ENCODE measurements at regions of chr17 and their contacts with region 1.

Region 1: DNA sequence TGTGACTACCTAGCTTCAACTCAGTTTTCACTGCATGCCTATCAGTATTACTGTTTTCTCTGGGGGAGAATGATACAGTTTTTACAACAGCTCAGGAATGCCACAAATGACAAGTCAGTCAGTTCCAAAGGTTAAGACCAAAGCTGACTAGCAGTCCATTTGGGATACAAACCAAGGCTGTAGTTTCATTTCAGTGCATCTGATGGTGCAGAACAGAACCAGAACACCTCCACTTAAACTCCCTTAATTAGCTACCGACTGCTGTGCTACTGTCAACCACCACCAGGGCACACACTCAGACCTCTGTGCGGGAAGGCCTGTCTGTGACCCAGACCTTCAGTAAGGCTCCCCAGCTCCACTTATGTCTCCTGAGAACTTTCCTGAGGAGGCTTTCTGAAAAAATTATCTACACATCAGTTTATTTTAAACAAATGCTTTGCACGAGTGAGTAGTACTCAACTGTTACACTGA is 20.4 kb downstream of the NFE2L1 start:
- DNase-seq: peak; percentile 82 to 87
- H3K4me3 ChIP-seq: no peak overlapping the region
- H3K4me3 Mint-ChIP-seq: peak overlapping the region; percentile 22
- H3K27ac Mint-ChIP-seq: peak overlapping the region; percentile 52
- H3K4me1 ChIP-seq: peaks cover 15% of the 10 kb centered on the region
- H3K4me1 Mint-ChIP-seq: peaks cover 34% of the 10 kb centered on the region
- H3K27me3 ChIP-seq: no peaks in the 10 kb centered on the region
- H3K27me3 Mint-ChIP-seq: no peaks in the 10 kb centered on the region
- CTCF ChIP-seq: peak; percentile 82 to 86

Region 2: GRCh38 chr17:47810205-47810821 is 258.2 kb before region 1 on chr17:
- CTCF ChIA-PET with region 1: no interaction called
- POLR2A ChIA-PET with region 1: no interaction called
- intact Hi-C with region 1: no loop called
- DNase-seq: peak; percentile 100
- H3K4me3 ChIP-seq: no peak overlapping the region
- H3K4me3 Mint-ChIP-seq: peak overlapping the region; percentile 56
- H3K27ac Mint-ChIP-seq: peak overlapping the region; percentile 93
- H3K4me1 ChIP-seq: peaks cover 36% of the 10 kb centered on the region
- H3K4me1 Mint-ChIP-seq: peaks cover 36% of the 10 kb centered on the region
- H3K27me3 ChIP-seq: no peaks in the 10 kb centered on the region
- H3K27me3 Mint-ChIP-seq: no peaks in the 10 kb centered on the region
- CTCF ChIP-seq: no peak

Region 3: DNA sequence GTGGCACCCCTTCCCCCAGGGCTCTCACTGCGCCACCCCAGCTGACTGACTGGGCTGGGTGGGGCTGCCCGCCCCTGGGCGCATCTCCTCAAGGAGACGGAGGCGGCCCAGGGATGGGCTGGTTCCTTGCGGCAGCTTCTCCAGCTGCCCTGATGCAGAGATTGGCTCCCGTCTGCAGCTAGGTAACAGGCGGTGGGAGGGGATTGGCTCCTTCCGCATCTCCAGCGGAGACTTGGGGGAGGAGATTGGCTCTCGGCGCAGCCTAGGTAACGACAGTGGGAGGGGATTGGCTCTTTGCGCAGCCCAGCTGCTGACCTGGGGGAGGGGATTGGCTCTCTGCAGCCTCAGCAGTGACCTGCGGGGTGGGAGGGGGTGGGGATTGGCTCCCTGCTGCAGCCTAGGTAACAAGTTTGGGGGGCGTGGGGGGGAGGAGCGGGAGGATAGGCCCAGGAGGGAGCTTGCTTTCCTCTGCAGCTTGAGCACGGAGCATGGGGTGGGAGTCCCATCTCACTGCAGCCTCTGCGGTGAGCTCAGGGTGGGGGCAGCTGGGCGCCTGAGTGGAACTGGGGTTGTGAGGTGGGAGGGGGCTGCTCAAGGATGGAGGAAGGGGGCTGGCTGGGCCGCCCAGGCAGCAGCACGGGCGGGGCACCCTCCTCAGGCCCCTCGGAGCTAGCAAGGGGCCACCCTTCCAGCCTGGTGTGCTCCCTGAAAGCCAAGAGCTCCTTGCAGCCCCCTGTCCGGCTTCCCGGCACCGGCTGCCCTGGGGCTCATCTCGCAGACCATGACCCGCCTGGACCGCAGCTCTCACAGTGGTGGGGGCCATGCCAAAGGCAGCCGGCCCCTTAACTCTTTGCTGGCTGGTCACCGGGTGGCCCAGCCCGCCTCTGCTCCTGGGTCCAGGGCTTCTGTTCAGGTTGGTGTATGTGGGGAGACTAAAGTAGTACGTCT is 14.0 kb before region 1 on chr17:
- CTCF ChIA-PET with region 1: interaction called, 57 read pairs
- POLR2A ChIA-PET with region 1: interaction called, 90 read pairs
- intact Hi-C with region 1: no loop called
- DNase-seq: peak in 1 of 2 experiments; percentile 53
- H3K4me3 ChIP-seq: no peak overlapping the region
- H3K4me3 Mint-ChIP-seq: peak overlapping the region; percentile 18
- H3K27ac Mint-ChIP-seq: peak overlapping the region; percentile 97
- H3K4me1 ChIP-seq: peaks cover 30% of the 10 kb centered on the region
- H3K4me1 Mint-ChIP-seq: peaks cover 40% of the 10 kb centered on the region
- H3K27me3 ChIP-seq: no peaks in the 10 kb centered on the region
- H3K27me3 Mint-ChIP-seq: no peaks in the 10 kb centered on the region
- CTCF ChIP-seq: no peak

Region 4: GRCh38 chr17:48101012-48101720 is 32.6 kb after region 1 on chr17 and contains the start of gene CBX1:
- CTCF ChIA-PET with region 1: interaction called, 10 read pairs
- POLR2A ChIA-PET with region 1: interaction called, 4 read pairs
- intact Hi-C with region 1: no loop called
- DNase-seq: peak; percentile 99 to 100
- H3K4me3 ChIP-seq: peak within 1 kb of the TSS; percentile 83
- H3K4me3 Mint-ChIP-seq: peak within 1 kb of the TSS; percentile 93
- H3K27ac Mint-ChIP-seq: peak within 1 kb of the TSS; percentile 79
- H3K4me1 ChIP-seq: peaks cover 8% of the 10 kb centered on the region
- H3K4me1 Mint-ChIP-seq: peaks cover 7% of the 10 kb centered on the region
- H3K27me3 ChIP-seq: no peaks in the 10 kb centered on the region
- H3K27me3 Mint-ChIP-seq: no peaks in the 10 kb centered on the region
- CTCF ChIP-seq: no peak
- total RNA-seq, gene CBX1: 213 and 214 TPM in 2 replicates

Region 5: DNA sequence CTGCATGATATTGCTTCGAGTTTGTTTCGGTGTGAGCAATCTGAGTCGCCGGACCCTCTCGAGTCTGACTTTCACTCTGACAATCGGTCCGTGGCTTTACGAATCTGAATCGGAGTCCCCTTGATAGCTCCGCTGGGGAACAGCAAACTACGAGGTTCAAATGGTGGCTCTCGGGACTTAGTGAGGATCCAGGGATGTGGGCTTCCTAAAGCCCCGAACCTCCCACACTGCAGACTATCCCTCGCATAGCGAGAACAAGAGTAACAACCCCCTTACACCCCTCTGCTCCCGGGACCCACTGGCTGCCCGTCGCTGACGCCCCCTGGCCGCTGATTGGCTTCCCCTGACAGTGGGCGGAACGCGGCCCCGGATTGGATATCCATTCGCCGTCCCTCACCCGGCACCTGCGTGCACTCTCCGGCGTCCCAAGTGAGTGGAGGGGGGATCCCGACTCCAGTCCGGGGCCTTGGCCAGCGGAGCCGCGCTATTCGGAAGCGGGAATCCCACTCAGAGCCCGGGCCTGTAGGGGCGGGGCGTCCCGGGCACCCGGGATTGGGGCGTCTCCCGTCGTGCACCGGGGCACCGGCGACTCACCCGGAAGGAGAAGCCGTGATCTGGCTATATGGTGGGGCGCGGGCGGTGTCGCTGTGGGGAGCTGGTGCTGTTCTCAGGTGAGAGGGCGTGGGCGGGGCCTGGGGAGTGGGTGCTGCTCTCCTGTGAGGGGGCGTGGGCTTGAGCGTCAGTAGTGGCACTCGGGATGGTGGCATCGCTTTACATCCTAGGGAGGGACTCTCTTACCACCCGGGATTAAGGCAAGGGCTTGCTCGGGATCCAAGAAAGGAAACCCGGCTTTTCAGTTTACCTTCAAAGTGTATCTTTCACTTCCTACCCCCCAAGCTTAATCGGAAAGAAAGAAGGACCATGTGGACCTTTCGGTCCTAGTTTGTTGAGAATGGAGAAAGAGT is 38.9 kb after region 1 on chr17 and contains the start of gene SNX11:
- CTCF ChIA-PET with region 1: interaction called, 12 read pairs
- POLR2A ChIA-PET with region 1: interaction called, 7 read pairs
- intact Hi-C with region 1: no loop called
- DNase-seq: peak; percentile 100
- H3K4me3 ChIP-seq: peak within 1 kb of the TSS; percentile 60
- H3K4me3 Mint-ChIP-seq: peak within 1 kb of the TSS; percentile 95
- H3K27ac Mint-ChIP-seq: peak within 1 kb of the TSS; percentile 95
- H3K4me1 ChIP-seq: 0 out of 2 replicates have a peak, but pooled peaks cover 6% of the 10 kb centered on the region
- H3K4me1 Mint-ChIP-seq: peaks cover 7% of the 10 kb centered on the region
- H3K27me3 ChIP-seq: no peaks in the 10 kb centered on the region
- H3K27me3 Mint-ChIP-seq: no peaks in the 10 kb centered on the region
- CTCF ChIP-seq: peak; percentile 33 to 48
- total RNA-seq, gene SNX11: 36.7 and 40.7 TPM in 2 replicates